ENCODE measurements at regions of chr14 and their contacts with region 1.

Region 1: GRCh38 chr14:91244501-91244901 is at the start of gene GPR68:
- DNase-seq: peak; percentile 72
- ATAC-seq: peak; percentile 12
- H3K4me3 Mint-ChIP-seq: peak within 1 kb of the TSS; percentile 86
- H3K27ac Mint-ChIP-seq: peak within 1 kb of the TSS; percentile 100
- H3K4me1 Mint-ChIP-seq: peaks cover 84% of the 10 kb centered on the region
- H3K27me3 Mint-ChIP-seq: no peaks in the 10 kb centered on the region
- total RNA-seq, gene GPR68: 44.5 to 48.0 TPM

Region 2: DNA sequence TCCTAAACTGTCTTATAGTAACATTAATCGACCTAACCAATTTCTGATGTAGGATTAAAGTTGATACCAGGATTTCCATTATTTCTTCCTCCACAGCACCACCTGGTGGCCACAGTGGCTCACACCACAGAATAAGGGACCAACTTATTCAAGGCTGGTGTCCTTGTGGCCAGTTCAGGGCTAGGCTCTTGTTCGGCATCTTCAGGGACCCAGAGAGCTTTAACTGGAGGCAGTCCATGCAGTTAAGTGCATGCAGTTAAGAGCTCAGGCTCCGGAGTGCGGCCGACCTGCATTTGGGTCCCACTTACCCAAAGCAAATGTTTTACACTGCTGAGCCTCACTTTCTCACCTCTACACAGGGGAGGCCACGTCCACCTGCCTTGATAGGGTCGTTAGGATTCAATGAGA is 42.0 kb after region 1 on chr14:
- CTCF ChIA-PET with region 1: interaction called, 18 read pairs
- DNase-seq: peak; percentile 86
- ATAC-seq: peak; percentile 82
- H3K4me3 Mint-ChIP-seq: no peak overlapping the region
- H3K27ac Mint-ChIP-seq: peak overlapping the region; percentile 36
- H3K4me1 Mint-ChIP-seq: peaks cover 25% of the 10 kb centered on the region
- H3K27me3 Mint-ChIP-seq: no peaks in the 10 kb centered on the region

Measured in activated CD8-positive, alpha-beta memory T cell treated with anti-CD3 and anti-CD28 coated beads, Interleukin-2, amount 10 ng/mL, durations not matched to agents 7 days and 5 days (primary cell).